Activated CD4-positive, alpha-beta T cell treated with anti-CD3 and anti-CD28 coated beads for 36 hours (primary cell): ENCODE measurements at regions of chr11 and their contacts with region 1.

Region 1: DNA sequence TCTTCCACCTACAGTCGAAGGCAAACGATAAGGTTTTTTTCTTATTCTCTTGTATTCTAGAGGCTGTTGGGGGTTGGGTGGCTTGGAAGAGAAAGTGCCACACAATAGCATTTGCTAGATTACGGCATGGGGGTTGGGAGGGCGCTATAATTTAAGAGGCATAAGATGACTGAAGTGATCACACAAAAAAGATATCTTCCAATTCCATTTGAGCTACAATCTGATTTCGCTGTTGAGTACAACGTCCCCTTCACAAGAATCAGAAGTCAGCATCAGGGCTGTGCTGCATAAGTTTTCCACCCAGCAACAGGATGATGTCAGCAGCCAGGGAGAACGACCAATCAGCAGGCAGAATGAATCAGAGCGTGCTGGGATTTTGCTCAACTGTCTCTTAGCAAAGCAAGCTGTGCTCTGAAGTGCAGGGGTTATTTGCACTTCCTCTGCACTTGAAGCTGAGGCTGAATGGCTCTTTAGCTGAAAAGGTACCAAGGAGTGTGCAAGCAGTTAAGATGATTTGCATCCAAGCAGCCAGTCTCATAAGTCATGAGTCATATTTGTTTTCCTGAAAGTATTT is 23.2 kb upstream of the SESN3 start:
- DNase-seq: peak; percentile 89
- ATAC-seq: peak; percentile 99
- H3K4me3 Mint-ChIP-seq: peak overlapping the region; percentile 79
- H3K27ac Mint-ChIP-seq: peak overlapping the region; percentile 95
- H3K4me1 Mint-ChIP-seq: peaks cover 46% of the 10 kb centered on the region
- H3K27me3 Mint-ChIP-seq: no peaks in the 10 kb centered on the region

Region 2: DNA sequence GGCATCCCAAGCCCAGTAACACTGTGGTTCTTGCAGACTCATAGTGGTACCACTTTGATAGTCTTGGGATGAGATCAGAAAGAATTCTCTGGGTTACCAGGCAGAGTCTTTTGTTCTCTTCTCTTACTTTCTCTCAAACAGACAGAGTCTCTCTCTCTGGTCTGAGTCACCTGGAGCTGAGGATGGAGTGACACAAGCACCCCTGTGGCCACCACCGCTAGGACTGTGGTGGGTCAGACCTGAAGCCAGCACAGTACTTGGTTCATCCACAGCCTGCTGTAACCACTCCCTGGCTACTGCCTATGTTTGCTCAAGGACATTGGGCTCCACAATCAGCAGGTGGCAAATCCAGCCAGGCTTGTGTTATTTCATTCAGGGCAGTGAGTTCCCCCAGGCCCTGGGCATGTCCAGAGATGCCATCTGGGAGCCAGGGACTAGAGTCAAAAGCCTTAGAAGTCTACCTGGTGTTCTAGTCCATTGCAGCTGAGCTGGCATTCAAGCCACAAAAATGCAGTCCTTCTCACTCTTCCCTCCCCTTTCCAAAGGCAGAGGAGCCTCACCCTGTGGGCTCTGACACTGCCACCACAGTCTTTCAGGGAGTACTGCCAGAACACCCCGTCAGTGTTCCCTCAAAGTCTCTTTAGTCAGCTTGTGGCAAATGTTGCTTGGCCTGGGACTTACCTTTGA is 134.7 kb before region 1 on chr11:
- CTCF ChIA-PET with region 1: no interaction called
- POLR2A ChIA-PET with region 1: no interaction called
- intact Hi-C with region 1: no loop called
- DNase-seq: no peak
- ATAC-seq: peak; percentile 51
- H3K4me3 Mint-ChIP-seq: no peak overlapping the region
- H3K27ac Mint-ChIP-seq: no peak overlapping the region
- H3K4me1 Mint-ChIP-seq: peaks cover 5% of the 10 kb centered on the region
- H3K27me3 Mint-ChIP-seq: no peaks in the 10 kb centered on the region

Region 3: DNA sequence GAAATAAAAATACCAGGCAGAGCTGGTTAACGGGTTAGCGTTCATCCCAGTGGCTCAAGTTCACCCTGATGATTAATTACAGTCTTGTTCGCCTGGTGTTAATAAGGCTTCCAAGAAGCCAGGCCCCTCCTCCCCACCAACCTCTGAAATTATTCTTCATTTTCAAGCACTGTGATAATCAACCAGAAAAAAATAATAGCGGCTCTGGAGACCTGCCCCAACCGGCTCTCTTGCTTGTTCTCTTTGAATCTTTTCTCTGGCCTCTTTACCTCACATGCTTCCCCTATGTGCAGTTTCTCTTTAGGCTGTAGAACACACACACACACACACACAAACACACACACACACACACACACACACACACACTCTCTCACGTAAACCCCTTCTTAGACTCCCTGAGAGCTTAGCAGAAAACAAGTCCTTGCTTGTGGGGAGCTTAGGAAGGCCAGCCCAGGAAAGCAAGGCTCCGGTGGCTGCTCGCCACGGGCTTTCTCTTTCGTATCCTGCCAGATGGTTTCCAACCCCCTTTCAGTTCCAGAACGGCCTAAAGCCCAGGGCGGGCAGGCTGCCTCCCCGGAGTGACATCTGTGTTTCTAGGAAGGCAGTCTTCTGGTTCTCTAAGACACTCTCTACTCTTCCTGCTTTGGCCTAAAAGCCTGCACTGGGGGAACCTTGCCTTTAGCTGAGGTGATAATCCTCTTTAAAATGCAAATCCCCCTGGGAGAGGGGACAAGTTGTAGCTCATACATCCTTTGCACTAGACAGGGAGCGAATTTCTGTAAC is 83.1 kb after region 1 on chr11:
- CTCF ChIA-PET with region 1: no interaction called
- POLR2A ChIA-PET with region 1: no interaction called
- intact Hi-C with region 1: loop called in 1 of 2 experiments (anchors 2 kb)
- DNase-seq: peak; percentile 63
- ATAC-seq: peak; percentile 74
- H3K4me3 Mint-ChIP-seq: no peak overlapping the region
- H3K27ac Mint-ChIP-seq: no peak overlapping the region
- H3K4me1 Mint-ChIP-seq: peaks cover 1% of the 10 kb centered on the region
- H3K27me3 Mint-ChIP-seq: no peaks in the 10 kb centered on the region